Naive thymus-derived CD4-positive, alpha-beta T cell (primary cell): ENCODE measurements at regions of chr2 and their contacts with region 1.

Region 1: GRCh38 chr2:105822186-105822585 is 77.5 kb downstream of the NCK2 start:
- DNase-seq: peak in 5 of 9 donors; percentile 18 to 41 (median 28)
- ATAC-seq: peak; percentile 86
- H3K4me3 ChIP-seq: no peak overlapping the region
- H3K4me3 Mint-ChIP-seq: peak overlapping the region; percentile 6 to 73 (median 57)
- H3K27ac ChIP-seq: peak overlapping the region; percentile 63
- H3K27ac Mint-ChIP-seq: peak overlapping the region; percentile 58 to 91 (median 86)
- H3K4me1 ChIP-seq: peaks cover 54 to 59% of the 10 kb centered on the region in 2 donors
- H3K4me1 Mint-ChIP-seq: peaks cover 47 to 87% (median 79%) of the 10 kb centered on the region in 7 donors
- H3K27me3 ChIP-seq: no peaks in the 10 kb centered on the region
- H3K27me3 Mint-ChIP-seq: no peaks in the 10 kb centered on the region

Region 2: DNA sequence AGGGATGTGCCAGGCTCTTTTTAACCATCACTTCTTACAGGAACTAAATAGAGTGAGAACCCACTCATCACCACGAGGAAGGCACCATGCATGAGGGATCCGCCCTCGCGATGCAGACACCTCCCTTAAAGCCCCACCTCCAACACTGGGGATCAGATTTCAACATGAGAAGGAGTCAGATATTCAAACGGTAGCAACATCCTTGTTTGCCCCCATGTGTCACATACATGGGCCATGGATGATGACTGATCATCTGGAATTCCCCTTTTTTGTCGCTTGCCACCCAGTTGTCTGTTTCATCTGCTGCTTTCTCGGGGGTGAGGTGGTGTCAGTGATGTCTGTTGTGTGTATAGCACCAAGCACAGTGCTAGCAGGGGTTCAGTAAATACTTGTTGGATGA is 19.6 kb before region 1 on chr2:
- CTCF ChIA-PET with region 1: interaction called, 4 read pairs
- POLR2A ChIA-PET with region 1: no interaction called
- intact Hi-C with region 1: loop called in 1 of 2 experiments (anchors 2 kb)
- DNase-seq: peak in 8 of 9 donors; percentile 36 to 90 (median 61)
- ATAC-seq: peak; percentile 84
- H3K4me3 ChIP-seq: peak overlapping the region; percentile 3
- H3K4me3 Mint-ChIP-seq: peak overlapping the region; percentile 60 to 89 (median 81)
- H3K27ac ChIP-seq: peak overlapping the region; percentile 74
- H3K27ac Mint-ChIP-seq: peak overlapping the region; percentile 92 to 100 (median 99)
- H3K4me1 ChIP-seq: peaks cover 86 to 93% of the 10 kb centered on the region in 2 donors
- H3K4me1 Mint-ChIP-seq: peaks cover 72 to 98% (median 96%) of the 10 kb centered on the region in 7 donors
- H3K27me3 ChIP-seq: no peaks in the 10 kb centered on the region
- H3K27me3 Mint-ChIP-seq: no peaks in the 10 kb centered on the region